ENCODE measurements at regions of chr11 and their contacts with region 1.

Region 1: GRCh38 chr11:131146827-131147490 is 223.5 kb upstream of the NTM start:
- DNase-seq: no peak
- ATAC-seq: no peak
- H3K4me3 Mint-ChIP-seq: no peak overlapping the region
- H3K27ac Mint-ChIP-seq: no peak overlapping the region
- H3K4me1 Mint-ChIP-seq: no peaks in the 10 kb centered on the region
- H3K27me3 Mint-ChIP-seq: no peaks in the 10 kb centered on the region
- CTCF ChIP-seq: no peak

Region 2: DNA sequence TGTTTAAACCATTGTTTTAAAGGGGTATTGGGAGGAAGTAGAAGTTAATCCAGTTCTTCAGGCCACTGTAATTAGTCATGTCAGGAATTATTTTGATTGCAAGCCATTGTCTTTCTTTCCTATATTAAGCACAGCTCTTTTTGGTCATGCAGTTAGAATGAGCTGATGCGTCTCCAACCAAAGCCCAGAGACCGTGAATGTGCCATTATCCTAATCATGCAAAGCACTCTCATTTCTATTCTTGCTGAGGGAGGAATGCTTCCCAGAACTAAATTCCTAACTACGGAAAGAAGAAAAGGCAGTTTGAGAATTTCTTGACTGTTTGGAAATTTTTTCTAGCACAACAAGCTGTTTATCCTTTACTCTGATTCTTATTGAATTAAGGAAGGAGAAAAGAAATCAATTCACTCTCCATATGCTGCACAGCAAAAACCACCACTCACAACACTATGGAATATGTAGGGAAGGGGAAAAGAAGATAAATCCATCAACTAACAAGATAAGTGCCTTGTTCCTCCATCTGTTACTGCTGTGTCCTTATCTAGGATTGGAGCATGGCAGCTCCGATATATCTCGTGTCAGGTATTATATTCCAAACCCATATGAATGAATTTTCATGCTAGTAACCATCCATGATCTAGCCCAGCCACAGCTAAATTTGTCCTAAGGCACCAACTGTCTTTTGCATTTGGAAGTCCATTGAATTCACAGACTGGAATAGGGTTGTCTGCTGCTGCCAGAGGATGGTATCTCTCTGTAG is 294.3 kb after region 1 on chr11:
- CTCF ChIA-PET with region 1: no interaction called
- POLR2A ChIA-PET with region 1: interaction called, 10 read pairs
- DNase-seq: no peak
- ATAC-seq: no peak
- H3K4me3 Mint-ChIP-seq: no peak overlapping the region
- H3K27ac Mint-ChIP-seq: no peak overlapping the region
- H3K4me1 Mint-ChIP-seq: no peaks in the 10 kb centered on the region
- H3K27me3 Mint-ChIP-seq: peaks cover 4% of the 10 kb centered on the region; the same call in 1 of the 2 replicates
- CTCF ChIP-seq: no peak

Measured in WTC11 (cell line).